HepG2 (cell line): ENCODE measurements at regions of chr15 and their contacts with region 1.

Region 1: GRCh38 chr15:61871926-61872522 is 188.2 kb downstream of the VPS13C start:
- DNase-seq: peak; percentile 13
- ATAC-seq: 0 out of 3 replicates have a peak, but pooled peaks have one; percentile 32
- H3K4me3 ChIP-seq: no peak overlapping the region
- H3K27ac ChIP-seq: no peak overlapping the region
- H3K4me1 ChIP-seq: no peaks in the 10 kb centered on the region
- H3K27me3 ChIP-seq: no peaks in the 10 kb centered on the region
- CTCF ChIP-seq: peak; percentile 56
- EP300 ChIP-seq: no peak
- POLR2A ChIP-seq: no peak
- RAD21 ChIP-seq: no peak

Region 2: GRCh38 chr15:61768091-61768490 is 103.9 kb before region 1 on chr15:
- CTCF ChIA-PET with region 1: no interaction called
- POLR2A ChIA-PET with region 1: no interaction called
- in situ Hi-C with region 1: no loop called
- intact Hi-C with region 1: no loop called
- DNase-seq: no peak
- ATAC-seq: no peak
- H3K4me3 ChIP-seq: no peak overlapping the region
- H3K27ac ChIP-seq: no peak overlapping the region
- H3K4me1 ChIP-seq: no peaks in the 10 kb centered on the region
- H3K27me3 ChIP-seq: no peaks in the 10 kb centered on the region; a peak in 2 of 5 replicates
- CTCF ChIP-seq: no peak
- EP300 ChIP-seq: no peak
- POLR2A ChIP-seq: no peak
- RAD21 ChIP-seq: no peak

Region 3: DNA sequence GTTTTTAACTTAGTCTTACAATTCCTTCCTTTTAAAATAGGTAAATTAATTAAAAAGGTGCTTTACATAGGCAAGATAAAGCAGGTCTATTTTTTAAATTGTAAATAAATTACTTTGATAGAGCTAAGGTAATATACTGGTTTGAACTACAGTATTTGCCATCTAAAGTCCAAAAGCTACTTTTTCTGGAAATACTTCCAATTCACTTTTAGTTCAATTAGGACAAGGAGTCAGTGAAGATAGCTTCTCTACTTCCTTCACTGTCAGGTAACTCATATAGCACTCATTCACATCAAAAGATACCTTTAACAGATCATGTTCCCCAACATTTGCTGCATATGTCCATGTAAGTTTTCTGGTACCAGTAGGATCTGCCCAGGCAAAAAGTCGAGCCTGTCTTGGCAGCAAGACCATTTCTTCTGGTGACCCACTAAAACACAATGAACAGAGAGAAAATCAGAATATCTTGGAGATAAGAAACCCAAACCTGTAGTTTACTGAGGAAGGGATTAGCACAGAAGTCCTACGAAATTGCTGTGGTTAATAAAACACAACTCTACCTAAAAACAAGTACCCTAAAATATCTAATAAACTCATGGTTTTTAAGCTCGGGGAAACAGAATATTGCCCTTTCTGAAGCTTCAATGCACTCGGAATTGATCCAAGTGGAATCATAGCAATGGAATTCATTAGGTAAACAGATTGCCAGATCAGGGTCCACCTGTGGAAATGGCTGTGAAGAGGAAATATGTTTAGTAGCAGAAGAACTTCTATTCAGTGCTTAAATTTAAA is 35.1 kb after region 1 on chr15:
- CTCF ChIA-PET with region 1: no interaction called
- POLR2A ChIA-PET with region 1: no interaction called
- in situ Hi-C with region 1: no loop called
- intact Hi-C with region 1: loop called (anchors 5 kb)
- DNase-seq: peak; percentile 90
- ATAC-seq: peak; percentile 98
- H3K4me3 ChIP-seq: peak overlapping the region in 1 of 3 experiments; percentile 20; a peak in 2 of 6 replicates
- H3K27ac ChIP-seq: peak overlapping the region; percentile 79
- H3K4me1 ChIP-seq: peaks cover 34% of the 10 kb centered on the region
- H3K27me3 ChIP-seq: no peaks in the 10 kb centered on the region
- CTCF ChIP-seq: no peak
- EP300 ChIP-seq: peak in 1 of 2 experiments; percentile 61; a peak in 1 of 4 replicates
- POLR2A ChIP-seq: no peak
- RAD21 ChIP-seq: no peak

Region 4: GRCh38 chr15:62021991-62022600 is 150.1 kb after region 1 on chr15:
- CTCF ChIA-PET with region 1: no interaction called
- POLR2A ChIA-PET with region 1: no interaction called
- in situ Hi-C with region 1: no loop called
- intact Hi-C with region 1: loop called (anchors 1 kb)
- DNase-seq: peak; percentile 15
- ATAC-seq: peak; percentile 58; the same call in 2 of the 3 replicates
- H3K4me3 ChIP-seq: no peak overlapping the region
- H3K27ac ChIP-seq: no peak overlapping the region
- H3K4me1 ChIP-seq: no peaks in the 10 kb centered on the region
- H3K27me3 ChIP-seq: no peaks in the 10 kb centered on the region
- CTCF ChIP-seq: peak; percentile 19; the same call in 1 of the 2 replicates
- EP300 ChIP-seq: no peak
- POLR2A ChIP-seq: no peak
- RAD21 ChIP-seq: no peak

Region 5: GRCh38 chr15:62066663-62067447 is 194.8 kb after region 1 on chr15 and contains the start of gene C2CD4A:
- CTCF ChIA-PET with region 1: interaction called, 6 read pairs
- POLR2A ChIA-PET with region 1: no interaction called
- in situ Hi-C with region 1: loop called (anchors 5 kb)
- intact Hi-C with region 1: loop called (anchors 1 kb)
- DNase-seq: peak; percentile 88
- ATAC-seq: peak; percentile 92
- H3K4me3 ChIP-seq: peak within 1 kb of the TSS; percentile 41 to 75 (median 48)
- H3K27ac ChIP-seq: no peak within 1 kb of the TSS
- H3K4me1 ChIP-seq: peaks cover 34% of the 10 kb centered on the region
- H3K27me3 ChIP-seq: peaks cover 0 to 3% of the 10 kb centered on the region in 2 experiments; a peak in 1 of 5 replicates
- CTCF ChIP-seq: peak; percentile 57
- EP300 ChIP-seq: peak; percentile 25 to 43; a peak in 1 of 4 replicates
- POLR2A ChIP-seq: peak in 1 of 2 experiments; percentile 72; a peak in 2 of 4 replicates
- RAD21 ChIP-seq: no peak
- total RNA-seq, gene C2CD4A: 0.17 and 0.20 TPM in 2 replicates

Region 6: GRCh38 chr15:62254137-62254934 is 382.3 kb after region 1 on chr15:
- CTCF ChIA-PET with region 1: no interaction called
- POLR2A ChIA-PET with region 1: no interaction called
- in situ Hi-C with region 1: no loop called
- intact Hi-C with region 1: loop called (anchors 10 kb)
- DNase-seq: peak; percentile 59
- ATAC-seq: peak; percentile 86
- H3K4me3 ChIP-seq: no peak overlapping the region
- H3K27ac ChIP-seq: no peak overlapping the region
- H3K4me1 ChIP-seq: peaks cover 54% of the 10 kb centered on the region
- H3K27me3 ChIP-seq: peaks cover 2 to 9% of the 10 kb centered on the region in 2 experiments; a peak in 2 of 5 replicates
- CTCF ChIP-seq: peak; percentile 76
- EP300 ChIP-seq: no peak
- POLR2A ChIP-seq: no peak
- RAD21 ChIP-seq: peak; percentile 53; the same call in 1 of the 2 replicates

Region 7: GRCh38 chr15:62306851-62307504 is 435.0 kb after region 1 on chr15:
- CTCF ChIA-PET with region 1: no interaction called
- POLR2A ChIA-PET with region 1: no interaction called
- in situ Hi-C with region 1: loop called (anchors 25 kb)
- intact Hi-C with region 1: no loop called
- DNase-seq: peak; percentile 73
- ATAC-seq: peak; percentile 96
- H3K4me3 ChIP-seq: no peak overlapping the region
- H3K27ac ChIP-seq: no peak overlapping the region
- H3K4me1 ChIP-seq: no peaks in the 10 kb centered on the region
- H3K27me3 ChIP-seq: peaks cover 1 to 15% of the 10 kb centered on the region in 2 experiments; a peak in 3 of 5 replicates
- CTCF ChIP-seq: peak; percentile 79
- EP300 ChIP-seq: no peak
- POLR2A ChIP-seq: no peak
- RAD21 ChIP-seq: peak; percentile 69